Aorta (tissue), 5 donors: ENCODE measurements at regions of chr7 and their contacts with region 1.

Region 1: DNA sequence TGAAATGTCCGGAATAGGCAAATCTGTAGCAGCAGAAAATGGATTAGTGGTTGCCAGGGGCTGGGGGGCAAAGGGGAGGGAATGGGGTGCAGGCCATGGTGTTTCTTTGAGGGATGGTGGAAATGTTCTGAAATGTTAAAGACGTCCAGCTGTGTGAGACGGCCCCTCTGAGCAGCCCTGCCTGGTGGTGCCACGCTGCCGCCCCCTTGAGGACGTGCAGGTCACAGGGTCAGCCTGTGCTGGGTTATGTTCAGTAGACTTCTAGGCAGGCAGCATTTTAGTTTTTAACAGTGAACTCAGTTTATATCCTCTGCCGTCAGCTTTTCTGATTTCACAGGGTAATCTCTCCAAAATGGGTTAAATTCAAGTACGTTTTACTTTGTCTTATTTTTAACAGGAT is 9.4 kb downstream of the NUB1 start:
- DNase-seq: no peak
- ATAC-seq: no peak
- H3K4me3 ChIP-seq: no peak overlapping the region
- H3K27ac ChIP-seq: no peak overlapping the region
- H3K4me1 ChIP-seq: no peaks in the 10 kb centered on the region
- H3K27me3 ChIP-seq: no peaks in the 10 kb centered on the region

Region 2: DNA sequence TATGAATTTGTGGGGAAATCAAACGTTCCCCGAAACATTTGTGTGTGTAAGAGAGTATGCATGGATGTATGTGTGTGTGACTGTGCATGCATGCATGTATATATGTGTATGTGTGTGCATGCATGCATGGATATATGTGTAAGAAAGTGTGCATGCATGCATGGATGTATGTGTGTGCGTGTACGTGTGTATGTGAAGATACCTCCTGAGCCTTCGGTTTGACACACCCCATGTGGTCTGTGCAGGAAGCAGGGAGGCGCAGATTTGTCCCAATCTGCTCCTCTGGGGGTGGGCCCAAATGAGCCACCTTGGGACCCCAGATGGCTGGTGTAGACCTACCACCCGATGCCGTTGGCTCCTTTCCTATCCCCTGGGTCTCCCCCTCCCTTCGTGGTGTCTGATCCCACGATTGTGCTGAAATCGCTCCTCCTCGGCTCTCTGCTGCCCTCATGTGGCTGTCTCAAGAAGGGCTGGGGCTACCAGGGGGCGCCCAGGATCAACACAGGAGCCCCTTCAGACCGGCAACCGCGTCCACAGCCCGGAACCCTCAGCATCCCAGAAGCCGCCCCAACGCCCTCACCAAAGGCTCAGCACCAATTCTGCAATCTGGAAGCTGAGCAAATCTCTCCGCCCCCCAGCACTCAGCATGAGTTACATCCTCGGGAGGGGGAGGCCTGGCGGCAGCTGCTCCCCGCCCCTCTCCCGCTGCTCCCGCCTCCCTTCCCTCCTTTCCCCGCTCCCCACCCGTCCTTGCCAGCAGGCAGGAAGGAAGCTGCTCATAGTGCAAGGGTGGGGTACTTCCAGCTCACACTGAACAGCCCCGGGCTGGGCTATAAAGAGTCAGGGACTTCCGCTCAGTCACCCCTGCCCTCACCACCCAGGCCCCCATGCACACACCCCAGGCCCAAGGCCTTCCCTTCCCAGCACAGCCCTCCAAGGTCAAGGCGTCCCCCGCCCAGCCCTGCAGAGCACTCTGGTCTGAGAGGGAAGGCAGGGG is 362.5 kb before region 1 on chr7:
- intact Hi-C with region 1: no loop called
- DNase-seq: peak; percentile 63 to 82
- ATAC-seq: peak; percentile 70
- H3K4me3 ChIP-seq: no peak overlapping the region
- H3K27ac ChIP-seq: no peak overlapping the region
- H3K4me1 ChIP-seq: no peaks in the 10 kb centered on the region
- H3K27me3 ChIP-seq: peaks cover 0 to 6% of the 10 kb centered on the region in 2 donors

Region 3: DNA sequence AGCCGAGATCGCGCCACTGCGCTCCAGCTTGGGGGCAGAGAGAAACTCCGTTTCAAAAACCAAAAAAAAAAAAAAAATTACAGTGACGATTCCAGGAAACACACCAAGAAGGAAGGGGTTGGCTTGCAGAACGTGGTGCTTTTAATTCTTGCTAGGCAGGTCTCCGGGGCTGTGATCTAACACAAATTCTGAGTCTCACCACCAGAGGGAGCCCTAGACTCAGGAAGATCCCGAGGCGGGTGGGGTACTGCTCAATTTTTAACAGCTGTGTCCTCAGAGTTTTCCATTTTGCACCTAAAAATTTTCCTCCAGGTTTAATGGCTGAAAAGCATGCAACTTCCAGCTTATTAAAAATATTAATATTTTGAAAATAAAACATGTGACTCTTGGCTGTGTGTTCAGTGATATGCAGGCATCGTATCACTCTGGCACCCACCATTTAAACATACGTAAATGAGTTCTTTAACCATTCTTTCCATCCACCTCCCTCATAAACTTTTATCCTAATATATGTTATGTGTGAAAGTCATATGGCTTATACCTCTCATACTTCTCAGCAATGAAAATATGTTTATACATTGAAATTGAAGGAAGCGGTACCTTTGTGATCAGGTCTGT is 35.9 kb before region 1 on chr7:
- intact Hi-C with region 1: loop called (anchors 1 to 2 kb)
- DNase-seq: peak in 1 of 2 donors; percentile 71
- ATAC-seq: peak; percentile 90
- H3K4me3 ChIP-seq: no peak overlapping the region
- H3K27ac ChIP-seq: no peak overlapping the region
- H3K4me1 ChIP-seq: no peaks in the 10 kb centered on the region
- H3K27me3 ChIP-seq: no peaks in the 10 kb centered on the region